Mammary epithelial cell (primary cell): ENCODE measurements at regions of chr17 and their contacts with region 1.

Region 1: GRCh38 chr17:13393841-13394710 is 207.7 kb downstream of the HS3ST3A1 start:
- DNase-seq: peak; percentile 89
- H3K4me3 ChIP-seq: no peak overlapping the region
- H3K27ac ChIP-seq: peak overlapping the region; percentile 70
- H3K4me1 ChIP-seq: peaks cover 29% of the 10 kb centered on the region
- H3K27me3 ChIP-seq: no peaks in the 10 kb centered on the region
- CTCF ChIP-seq: no peak

Region 2: DNA sequence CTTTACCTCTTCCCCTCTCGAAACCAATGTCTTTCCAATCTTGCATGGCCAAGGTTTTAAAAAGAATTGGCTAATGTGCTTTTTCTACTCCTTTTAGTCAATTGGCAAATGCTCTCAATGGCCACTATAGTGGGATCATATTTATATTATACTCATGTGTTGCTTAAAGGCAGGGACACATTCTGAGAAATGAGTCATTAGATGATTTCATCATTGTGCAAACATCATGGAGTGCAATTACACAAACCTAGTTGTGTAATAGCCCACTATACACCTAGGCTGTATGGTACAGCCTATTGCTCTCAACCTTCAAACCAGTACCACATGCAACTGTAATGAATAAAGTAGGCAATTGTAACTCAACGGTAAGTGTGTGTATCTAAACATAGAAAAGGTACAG is 26.8 kb after region 1 on chr17:
- CTCF ChIA-PET with region 1: no interaction called
- dilution Hi-C with region 1: no loop called
- in situ Hi-C with region 1: no loop called
- intact Hi-C with region 1: loop called (anchors 2 kb)
- DNase-seq: peak; percentile 87
- H3K4me3 ChIP-seq: no peak overlapping the region
- H3K27ac ChIP-seq: peak overlapping the region; percentile 14
- H3K4me1 ChIP-seq: peaks cover 25% of the 10 kb centered on the region
- H3K27me3 ChIP-seq: no peaks in the 10 kb centered on the region
- CTCF ChIP-seq: no peak